ENCODE measurements at regions of chr3 and their contacts with region 1.

Region 1: GRCh38 chr3:136752422-136753325 is 496 bp upstream of the STAG1 start:
- DNase-seq: peak; percentile 99
- ATAC-seq: peak; percentile 85
- H3K4me3 Mint-ChIP-seq: peak overlapping the region; percentile 93
- H3K27ac Mint-ChIP-seq: peak overlapping the region; percentile 92
- H3K4me1 Mint-ChIP-seq: peaks cover 42% of the 10 kb centered on the region
- H3K27me3 Mint-ChIP-seq: no peaks in the 10 kb centered on the region
- CTCF ChIP-seq: peak; percentile 66

Region 2: GRCh38 chr3:134772011-134772410 is 1980.7 kb before region 1 on chr3:
- CTCF ChIA-PET with region 1: no interaction called
- POLR2A ChIA-PET with region 1: no interaction called
- intact Hi-C with region 1: no loop called
- DNase-seq: no peak
- ATAC-seq: no peak
- H3K4me3 Mint-ChIP-seq: no peak overlapping the region
- H3K27ac Mint-ChIP-seq: no peak overlapping the region
- H3K4me1 Mint-ChIP-seq: no peaks in the 10 kb centered on the region
- H3K27me3 Mint-ChIP-seq: no peaks in the 10 kb centered on the region
- CTCF ChIP-seq: no peak

Region 3: DNA sequence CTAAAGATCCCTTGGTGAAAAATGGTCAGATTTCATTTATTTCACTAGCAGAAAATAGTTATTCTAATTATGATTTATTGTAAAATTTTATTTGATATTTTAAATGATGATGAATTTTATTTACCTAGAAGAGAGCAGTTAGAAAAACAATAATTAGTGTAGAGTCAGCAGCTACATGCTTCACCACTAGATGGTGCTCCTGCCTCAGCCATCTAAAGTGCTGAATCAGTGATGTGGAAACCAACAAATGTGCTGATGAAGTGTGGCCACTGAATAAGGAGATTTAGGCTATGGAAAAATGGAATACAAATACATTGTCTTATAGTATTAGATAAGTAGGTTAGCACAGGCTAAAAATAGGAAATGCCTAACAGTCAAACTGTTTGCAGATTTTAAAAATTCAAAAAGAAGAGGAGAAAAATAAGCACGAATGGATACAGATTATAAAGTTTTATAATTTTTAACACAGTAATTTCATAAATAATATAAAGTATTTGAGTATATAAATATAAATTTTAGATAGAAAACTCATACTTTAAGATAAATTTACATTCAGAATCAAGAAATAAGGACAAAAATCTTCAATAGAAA is 677.4 kb before region 1 on chr3:
- CTCF ChIA-PET with region 1: interaction called, 27 read pairs
- POLR2A ChIA-PET with region 1: interaction called, 9 read pairs
- intact Hi-C with region 1: loop called (anchors 1 kb)
- DNase-seq: peak; percentile 36
- ATAC-seq: peak; percentile 54
- H3K4me3 Mint-ChIP-seq: no peak overlapping the region
- H3K27ac Mint-ChIP-seq: no peak overlapping the region
- H3K4me1 Mint-ChIP-seq: peaks cover 2% of the 10 kb centered on the region
- H3K27me3 Mint-ChIP-seq: peaks cover 3% of the 10 kb centered on the region
- CTCF ChIP-seq: peak; percentile 98

Region 4: DNA sequence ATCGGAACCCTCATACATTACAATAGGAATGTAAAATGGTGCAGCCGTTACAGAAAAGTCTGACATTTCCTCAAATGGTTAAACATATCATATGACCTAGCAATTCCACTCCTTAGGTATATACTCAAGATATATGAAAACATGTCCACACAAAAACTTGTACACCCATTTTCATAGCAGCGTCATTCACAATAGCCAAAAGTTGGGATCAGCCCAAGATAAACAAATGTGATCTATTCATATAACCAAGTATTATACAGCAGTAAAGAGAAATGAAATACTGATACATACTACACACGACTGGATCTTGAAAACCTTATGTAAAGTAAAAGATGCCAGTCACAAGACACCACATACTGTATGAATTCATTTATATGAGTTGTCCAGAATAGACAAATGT is 658.9 kb before region 1 on chr3:
- CTCF ChIA-PET with region 1: no interaction called
- POLR2A ChIA-PET with region 1: no interaction called
- intact Hi-C with region 1: no loop called
- DNase-seq: no peak
- ATAC-seq: no peak
- H3K4me3 Mint-ChIP-seq: no peak overlapping the region
- H3K27ac Mint-ChIP-seq: no peak overlapping the region
- H3K4me1 Mint-ChIP-seq: no peaks in the 10 kb centered on the region
- H3K27me3 Mint-ChIP-seq: no peaks in the 10 kb centered on the region
- CTCF ChIP-seq: no peak

Region 5: GRCh38 chr3:136350132-136350531 is 402.5 kb before region 1 on chr3:
- CTCF ChIA-PET with region 1: interaction called, 3 read pairs
- POLR2A ChIA-PET with region 1: no interaction called
- intact Hi-C with region 1: loop called (anchors 5 kb)
- DNase-seq: no peak
- ATAC-seq: no peak
- H3K4me3 Mint-ChIP-seq: no peak overlapping the region
- H3K27ac Mint-ChIP-seq: no peak overlapping the region
- H3K4me1 Mint-ChIP-seq: peaks cover 3% of the 10 kb centered on the region
- H3K27me3 Mint-ChIP-seq: no peaks in the 10 kb centered on the region
- CTCF ChIP-seq: no peak

Region 6: DNA sequence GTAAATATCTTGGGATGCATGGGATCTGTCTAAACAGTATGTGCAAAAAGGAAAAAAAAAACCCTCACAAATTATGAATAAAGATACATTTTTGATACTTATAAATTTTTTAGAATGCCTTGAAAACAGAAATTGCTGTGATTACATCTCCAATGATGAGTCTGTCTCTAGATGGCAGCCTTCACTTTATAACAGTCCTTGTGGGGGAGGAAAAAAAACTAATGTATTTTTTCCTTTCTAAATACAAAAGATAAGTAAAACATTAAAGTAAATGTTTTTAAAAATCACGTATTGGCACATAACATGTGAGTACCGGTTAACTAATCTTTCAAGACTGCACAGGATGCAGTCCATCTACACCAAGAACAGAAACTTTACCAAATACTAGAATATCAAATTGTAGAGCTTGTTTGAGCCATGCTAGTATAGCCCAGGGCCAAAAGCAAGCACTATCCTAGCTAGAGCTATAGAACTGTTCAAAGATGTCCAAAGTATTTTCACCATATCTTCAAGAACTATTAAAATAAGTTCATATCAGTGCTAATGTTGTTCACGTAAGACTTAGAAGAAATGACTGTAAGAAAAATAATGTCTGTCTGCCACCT is 206.9 kb before region 1 on chr3:
- CTCF ChIA-PET with region 1: interaction called, 13 read pairs
- POLR2A ChIA-PET with region 1: interaction called, 8 read pairs
- intact Hi-C with region 1: loop called (anchors 2 kb)
- DNase-seq: no peak
- ATAC-seq: no peak
- H3K4me3 Mint-ChIP-seq: no peak overlapping the region
- H3K27ac Mint-ChIP-seq: no peak overlapping the region
- H3K4me1 Mint-ChIP-seq: peaks cover 17% of the 10 kb centered on the region
- H3K27me3 Mint-ChIP-seq: no peaks in the 10 kb centered on the region
- CTCF ChIP-seq: no peak

Region 7: GRCh38 chr3:136818769-136819391 is 66.2 kb after region 1 on chr3 and contains the start of gene SLC35G2:
- CTCF ChIA-PET with region 1: no interaction called
- POLR2A ChIA-PET with region 1: interaction called, 22 read pairs
- intact Hi-C with region 1: loop called (anchors 1 kb)
- DNase-seq: peak; percentile 42
- ATAC-seq: peak; percentile 67
- H3K4me3 Mint-ChIP-seq: peak within 1 kb of the TSS; percentile 89
- H3K27ac Mint-ChIP-seq: peak within 1 kb of the TSS; percentile 87
- H3K4me1 Mint-ChIP-seq: peaks cover 22% of the 10 kb centered on the region
- H3K27me3 Mint-ChIP-seq: peaks cover 21% of the 10 kb centered on the region
- CTCF ChIP-seq: no peak
- total RNA-seq, gene SLC35G2: 4.2 and 4.3 TPM in 2 replicates

Region 8: GRCh38 chr3:137013955-137014688 is 261.4 kb after region 1 on chr3:
- CTCF ChIA-PET with region 1: interaction called, 59 read pairs
- POLR2A ChIA-PET with region 1: interaction called, 29 read pairs
- intact Hi-C with region 1: loop called (anchors 1 kb)
- DNase-seq: peak; percentile 76
- ATAC-seq: peak; percentile 88
- H3K4me3 Mint-ChIP-seq: peak overlapping the region; percentile 65
- H3K27ac Mint-ChIP-seq: no peak overlapping the region
- H3K4me1 Mint-ChIP-seq: peaks cover 8% of the 10 kb centered on the region
- H3K27me3 Mint-ChIP-seq: no peaks in the 10 kb centered on the region
- CTCF ChIP-seq: no peak

Region 9: GRCh38 chr3:137032465-137033120 is 279.9 kb after region 1 on chr3:
- CTCF ChIA-PET with region 1: no interaction called
- POLR2A ChIA-PET with region 1: no interaction called
- intact Hi-C with region 1: no loop called
- DNase-seq: peak; percentile 61
- ATAC-seq: peak; percentile 85
- H3K4me3 Mint-ChIP-seq: peak overlapping the region; percentile 68
- H3K27ac Mint-ChIP-seq: no peak overlapping the region
- H3K4me1 Mint-ChIP-seq: peaks cover 7% of the 10 kb centered on the region
- H3K27me3 Mint-ChIP-seq: peaks cover 32% of the 10 kb centered on the region
- CTCF ChIP-seq: peak; percentile 97